ENCODE measurements at regions of chr10 and their contacts with region 1.

Region 1: GRCh38 chr10:16777473-16778370 is 39.5 kb downstream of the RSU1 start:
- DNase-seq: no peak
- H3K4me3 ChIP-seq: no peak overlapping the region
- H3K27ac ChIP-seq: peak overlapping the region in 1 of 4 donors; percentile 71
- H3K4me1 ChIP-seq: peaks cover 0 to 13% (median 1%) of the 10 kb centered on the region in 4 donors
- H3K27me3 ChIP-seq: no peaks in the 10 kb centered on the region
- CTCF ChIP-seq: peak; percentile 76 to 82 (median 79)
- EP300 ChIP-seq: no peak
- POLR2A ChIP-seq: no peak

Region 2: GRCh38 chr10:15901889-15902288 is 875.8 kb before region 1 on chr10:
- in situ Hi-C with region 1: loop called (anchors 10 to 25 kb)
- intact Hi-C with region 1: loop called (anchors 10 kb)
- DNase-seq: no peak
- H3K4me3 ChIP-seq: no peak overlapping the region
- H3K27ac ChIP-seq: no peak overlapping the region
- H3K4me1 ChIP-seq: no peaks in the 10 kb centered on the region
- H3K27me3 ChIP-seq: peaks cover 11% of the 10 kb centered on the region
- CTCF ChIP-seq: no peak
- EP300 ChIP-seq: no peak
- POLR2A ChIP-seq: no peak

Region 3: GRCh38 chr10:16583382-16583781 is 194.3 kb before region 1 on chr10:
- in situ Hi-C with region 1: no loop called
- intact Hi-C with region 1: no loop called
- DNase-seq: no peak
- H3K4me3 ChIP-seq: no peak overlapping the region
- H3K27ac ChIP-seq: no peak overlapping the region
- H3K4me1 ChIP-seq: no peaks in the 10 kb centered on the region
- H3K27me3 ChIP-seq: no peaks in the 10 kb centered on the region
- CTCF ChIP-seq: no peak
- EP300 ChIP-seq: no peak
- POLR2A ChIP-seq: no peak

Region 4: GRCh38 chr10:16843252-16843870 is 65.6 kb after region 1 on chr10:
- in situ Hi-C with region 1: no loop called
- intact Hi-C with region 1: no loop called
- DNase-seq: no peak
- H3K4me3 ChIP-seq: no peak overlapping the region
- H3K27ac ChIP-seq: no peak overlapping the region
- H3K4me1 ChIP-seq: no peaks in the 10 kb centered on the region
- H3K27me3 ChIP-seq: no peaks in the 10 kb centered on the region
- CTCF ChIP-seq: peak; percentile 45 to 65 (median 61)
- EP300 ChIP-seq: no peak
- POLR2A ChIP-seq: no peak

Region 5: DNA sequence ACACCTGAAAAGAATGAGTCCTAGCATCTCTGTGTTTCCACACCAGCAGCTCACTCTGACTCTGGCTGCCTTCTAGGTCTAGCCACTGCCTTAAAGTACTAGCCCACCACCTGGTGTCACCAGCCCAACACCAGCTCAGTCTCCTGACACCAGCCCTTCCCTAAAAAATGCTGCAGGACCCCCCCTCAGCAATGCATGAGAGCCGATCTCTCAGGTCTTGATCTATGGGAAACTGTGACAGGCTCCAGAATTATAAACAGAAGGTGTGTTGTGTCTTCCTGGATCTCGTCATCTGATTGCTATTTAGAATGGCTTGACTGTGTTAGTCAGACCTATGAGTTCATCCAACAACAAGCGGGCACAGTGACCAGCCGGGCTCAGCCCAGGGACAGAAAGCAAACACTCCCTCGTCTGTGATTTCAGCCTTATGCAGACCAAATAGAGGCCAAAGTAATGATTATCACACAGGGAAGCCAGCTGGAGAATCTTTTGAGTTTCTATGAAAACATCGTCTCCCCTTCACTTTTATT is 285.3 kb after region 1 on chr10:
- in situ Hi-C with region 1: no loop called
- intact Hi-C with region 1: no loop called
- DNase-seq: no peak
- H3K4me3 ChIP-seq: no peak overlapping the region
- H3K27ac ChIP-seq: peak overlapping the region; percentile 6 to 53 (median 27)
- H3K4me1 ChIP-seq: peaks cover 0 to 2% (median 0%) of the 10 kb centered on the region in 4 donors
- H3K27me3 ChIP-seq: no peaks in the 10 kb centered on the region
- CTCF ChIP-seq: no peak
- EP300 ChIP-seq: no peak
- POLR2A ChIP-seq: no peak